Activated CD4-positive, alpha-beta memory T cell treated with anti-CD3 and anti-CD28 coated beads for 36 hours (primary cell): ENCODE measurements at regions of chr12 and their contacts with region 1.

Region 1: DNA sequence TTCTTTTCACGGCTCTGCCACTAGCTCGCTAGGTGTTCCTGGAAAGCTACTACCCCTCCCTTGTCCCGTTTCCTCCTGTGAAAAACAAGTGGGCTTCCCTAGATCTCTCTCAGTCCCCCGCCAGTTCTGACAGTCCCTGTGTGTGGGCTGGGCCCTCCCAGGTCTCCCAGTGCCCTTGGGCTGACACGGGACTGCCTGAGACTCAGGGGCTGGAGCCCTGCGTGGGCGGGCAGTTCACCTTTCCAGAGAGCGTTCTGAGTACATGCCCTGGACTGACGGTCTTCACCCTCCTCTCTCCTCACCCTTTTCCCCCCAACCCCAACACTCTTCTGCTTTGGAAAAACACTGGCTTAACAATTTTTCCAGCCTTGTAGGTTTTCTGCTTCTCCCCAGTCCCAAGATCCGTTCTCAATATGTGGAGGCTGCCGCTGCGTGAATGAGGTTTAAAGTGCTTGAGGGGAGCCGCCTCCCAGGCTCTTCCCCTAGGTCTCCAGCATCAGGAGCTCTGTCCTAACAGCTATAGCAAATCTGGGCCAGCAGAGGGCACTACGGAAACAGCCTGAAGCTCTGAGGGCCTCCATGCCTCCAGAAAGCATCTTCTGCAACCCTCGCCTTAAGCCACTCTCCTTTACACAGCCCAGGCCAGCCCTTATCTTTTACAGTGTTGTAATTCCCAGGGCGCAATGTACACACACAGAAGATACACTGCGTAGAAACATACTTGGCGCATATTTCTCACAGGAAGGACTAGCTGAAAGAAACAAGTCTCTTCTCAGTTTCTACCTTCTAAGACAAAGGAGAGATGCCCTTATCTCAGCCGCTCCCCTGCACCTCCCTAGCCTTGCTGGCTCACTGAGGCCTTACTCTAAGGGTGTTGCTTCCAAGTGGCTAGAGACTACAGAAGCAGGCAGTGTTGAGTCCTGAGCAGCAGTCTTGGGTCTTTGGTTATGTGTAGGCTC is 10.4 kb upstream of the DCD start:
- DNase-seq: peak; percentile 64
- H3K4me3 Mint-ChIP-seq: no peak overlapping the region
- H3K27ac Mint-ChIP-seq: no peak overlapping the region
- H3K4me1 Mint-ChIP-seq: no peaks in the 10 kb centered on the region
- H3K27me3 Mint-ChIP-seq: peaks cover 8% of the 10 kb centered on the region

Region 2: GRCh38 chr12:54017878-54018467 is 640.6 kb before region 1 on chr12:
- CTCF ChIA-PET with region 1: no interaction called
- POLR2A ChIA-PET with region 1: no interaction called
- intact Hi-C with region 1: no loop called
- DNase-seq: peak; percentile 73
- H3K4me3 Mint-ChIP-seq: peak overlapping the region; percentile 72
- H3K27ac Mint-ChIP-seq: no peak overlapping the region
- H3K4me1 Mint-ChIP-seq: peaks cover 19% of the 10 kb centered on the region
- H3K27me3 Mint-ChIP-seq: peaks cover 69% of the 10 kb centered on the region

Region 3: DNA sequence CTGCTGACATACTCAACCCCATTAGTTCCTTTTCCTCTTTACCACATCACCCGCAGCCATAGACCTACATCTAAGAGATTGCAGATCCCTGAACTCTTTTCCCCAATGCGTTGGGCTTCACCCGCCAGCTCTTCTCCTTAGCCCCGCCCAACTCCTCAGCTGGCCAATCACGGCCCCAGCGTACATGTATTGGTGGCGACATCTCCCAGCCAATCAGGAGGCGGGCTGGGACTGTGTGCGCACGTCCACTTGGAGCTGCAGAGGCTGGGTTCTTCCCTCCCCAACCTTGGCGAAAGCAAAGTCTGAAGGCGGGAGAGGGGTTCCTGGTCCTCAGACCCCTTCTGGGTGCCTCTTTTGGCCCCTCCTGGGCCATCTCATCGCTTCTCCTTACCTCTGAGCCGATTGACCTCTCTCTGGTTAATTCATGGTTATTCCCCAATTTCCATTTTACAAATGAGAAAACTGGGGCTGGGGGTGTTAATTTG is 98.2 kb before region 1 on chr12:
- CTCF ChIA-PET with region 1: no interaction called
- POLR2A ChIA-PET with region 1: no interaction called
- intact Hi-C with region 1: no loop called
- DNase-seq: peak; percentile 94
- H3K4me3 Mint-ChIP-seq: peak overlapping the region; percentile 69
- H3K27ac Mint-ChIP-seq: peak overlapping the region; percentile 74
- H3K4me1 Mint-ChIP-seq: peaks cover 23% of the 10 kb centered on the region
- H3K27me3 Mint-ChIP-seq: no peaks in the 10 kb centered on the region

Region 4: GRCh38 chr12:54596526-54596946 is 62.0 kb before region 1 on chr12:
- CTCF ChIA-PET with region 1: interaction called, 12 read pairs
- POLR2A ChIA-PET with region 1: no interaction called
- intact Hi-C with region 1: no loop called
- DNase-seq: peak; percentile 72
- H3K4me3 Mint-ChIP-seq: no peak overlapping the region
- H3K27ac Mint-ChIP-seq: no peak overlapping the region
- H3K4me1 Mint-ChIP-seq: no peaks in the 10 kb centered on the region
- H3K27me3 Mint-ChIP-seq: peaks cover 6% of the 10 kb centered on the region